Caco-2 (cell line): ENCODE measurements at regions of chr1 and their contacts with region 1.

Region 1: GRCh38 chr1:6784560-6785317 is 515 bp upstream of the CAMTA1 start:
- DNase-seq: peak; percentile 99 to 100
- H3K4me3 ChIP-seq: peak overlapping the region; percentile 54
- H3K4me3 Mint-ChIP-seq: peak overlapping the region; percentile 88
- H3K27ac Mint-ChIP-seq: peak overlapping the region; percentile 82
- H3K4me1 ChIP-seq: 0 out of 2 replicates have a peak, but pooled peaks cover 5% of the 10 kb centered on the region
- H3K4me1 Mint-ChIP-seq: peaks cover 28% of the 10 kb centered on the region
- H3K27me3 ChIP-seq: no peaks in the 10 kb centered on the region
- H3K27me3 Mint-ChIP-seq: no peaks in the 10 kb centered on the region
- CTCF ChIP-seq: no peak

Region 2: GRCh38 chr1:6727535-6727934 is 57.2 kb before region 1 on chr1:
- CTCF ChIA-PET with region 1: interaction called, 4 read pairs
- POLR2A ChIA-PET with region 1: interaction called, 6 read pairs
- intact Hi-C with region 1: loop called (anchors 2 kb)
- DNase-seq: peak in 1 of 2 experiments; percentile 48
- H3K4me3 ChIP-seq: no peak overlapping the region
- H3K4me3 Mint-ChIP-seq: no peak overlapping the region
- H3K27ac Mint-ChIP-seq: no peak overlapping the region
- H3K4me1 ChIP-seq: peaks cover 15% of the 10 kb centered on the region
- H3K4me1 Mint-ChIP-seq: peaks cover 19% of the 10 kb centered on the region
- H3K27me3 ChIP-seq: no peaks in the 10 kb centered on the region
- H3K27me3 Mint-ChIP-seq: peaks cover 7% of the 10 kb centered on the region
- CTCF ChIP-seq: peak; percentile 71 to 78

Region 3: DNA sequence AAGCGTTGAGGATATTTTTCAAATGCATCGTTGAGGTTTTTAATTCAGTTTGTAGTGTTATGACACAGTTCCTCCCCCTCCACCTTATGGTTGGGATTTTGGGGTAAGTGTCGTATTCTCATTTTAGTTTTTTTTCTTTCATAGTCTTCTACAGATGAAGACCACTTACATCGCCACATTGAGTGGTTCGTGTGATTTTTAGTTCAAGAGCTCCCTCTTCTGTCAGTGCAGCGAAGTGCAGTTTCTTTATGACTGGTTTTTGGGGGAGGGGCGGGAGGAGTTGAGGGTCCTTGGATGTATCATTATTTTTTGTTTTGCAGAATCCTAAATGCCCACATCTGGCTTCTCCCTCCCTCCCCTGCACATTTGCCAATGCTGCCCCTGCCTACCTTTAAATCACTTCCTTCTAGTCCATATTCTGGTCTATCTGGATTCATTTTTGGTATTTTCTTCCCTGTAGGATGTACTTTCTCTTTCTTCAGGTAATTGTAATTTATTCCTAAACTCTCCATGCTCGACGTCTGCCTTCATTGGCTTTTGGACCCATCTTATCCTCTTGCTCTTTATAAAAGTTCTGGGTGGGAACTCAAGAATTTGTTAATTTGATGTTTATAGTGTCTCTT is 433.6 kb after region 1 on chr1:
- CTCF ChIA-PET with region 1: no interaction called
- POLR2A ChIA-PET with region 1: no interaction called
- intact Hi-C with region 1: loop called (anchors 10 kb)
- DNase-seq: peak in 1 of 2 experiments; percentile 49
- H3K4me3 ChIP-seq: no peak overlapping the region
- H3K4me3 Mint-ChIP-seq: no peak overlapping the region
- H3K27ac Mint-ChIP-seq: no peak overlapping the region
- H3K4me1 ChIP-seq: no peaks in the 10 kb centered on the region
- H3K4me1 Mint-ChIP-seq: no peaks in the 10 kb centered on the region
- H3K27me3 ChIP-seq: no peaks in the 10 kb centered on the region
- H3K27me3 Mint-ChIP-seq: peaks cover 16% of the 10 kb centered on the region
- CTCF ChIP-seq: peak; percentile 79 to 80